Posterior vena cava (tissue), 2 donors: ENCODE measurements at regions of chr17 and their contacts with region 1.

Region 1: DNA sequence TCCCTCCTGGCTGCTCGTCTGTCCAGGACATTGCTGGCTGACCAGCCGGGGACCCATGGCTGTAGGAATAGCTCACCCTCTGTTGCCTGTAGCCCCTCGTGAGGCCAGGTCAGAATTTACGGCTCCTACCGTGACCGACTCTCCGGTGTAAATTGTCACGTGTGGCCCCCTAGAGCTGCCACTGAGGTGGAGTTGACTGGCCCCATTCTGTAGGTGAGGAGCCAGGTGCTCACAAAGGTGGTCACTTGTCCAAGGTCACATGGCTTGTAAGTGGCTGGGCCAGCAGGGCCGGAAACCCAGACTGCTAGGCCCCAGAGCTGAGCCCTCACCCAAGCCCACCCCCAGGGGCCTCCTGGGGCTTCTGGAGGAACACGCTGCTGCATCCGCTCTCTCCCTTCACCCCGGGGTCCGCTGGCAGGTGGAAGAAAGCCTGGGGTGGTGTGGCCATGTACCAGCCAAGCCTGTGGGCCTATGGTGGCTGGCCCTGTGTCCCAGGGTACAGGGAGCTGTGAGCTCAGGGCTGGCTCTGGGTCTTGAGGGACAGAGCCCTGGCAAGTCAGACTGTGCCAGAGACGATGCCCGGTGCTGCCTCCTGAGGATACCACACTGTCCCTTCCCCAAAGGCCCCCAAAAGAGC is 120.7 kb downstream of the RAB11FIP4 start:
- DNase-seq: no peak

Region 2: GRCh38 chr17:31531336-31531980 is 19.2 kb after region 1 on chr17:
- intact Hi-C with region 1: loop called in 1 of 2 experiments (anchors 1 kb)
- DNase-seq: peak; percentile 69

Region 3: GRCh38 chr17:31558748-31559644 is 46.8 kb after region 1 on chr17:
- intact Hi-C with region 1: no loop called
- DNase-seq: peak; percentile 94